Right ventricle myocardium inferior (tissue), 1 donor: ENCODE measurements at regions of chr11 and their contacts with region 1.

Region 1: GRCh38 chr11:75476739-75477612 is 44.0 kb upstream of the KLHL35 start:
- DNase-seq: no peak
- ATAC-seq: peak; percentile 61

Region 2: DNA sequence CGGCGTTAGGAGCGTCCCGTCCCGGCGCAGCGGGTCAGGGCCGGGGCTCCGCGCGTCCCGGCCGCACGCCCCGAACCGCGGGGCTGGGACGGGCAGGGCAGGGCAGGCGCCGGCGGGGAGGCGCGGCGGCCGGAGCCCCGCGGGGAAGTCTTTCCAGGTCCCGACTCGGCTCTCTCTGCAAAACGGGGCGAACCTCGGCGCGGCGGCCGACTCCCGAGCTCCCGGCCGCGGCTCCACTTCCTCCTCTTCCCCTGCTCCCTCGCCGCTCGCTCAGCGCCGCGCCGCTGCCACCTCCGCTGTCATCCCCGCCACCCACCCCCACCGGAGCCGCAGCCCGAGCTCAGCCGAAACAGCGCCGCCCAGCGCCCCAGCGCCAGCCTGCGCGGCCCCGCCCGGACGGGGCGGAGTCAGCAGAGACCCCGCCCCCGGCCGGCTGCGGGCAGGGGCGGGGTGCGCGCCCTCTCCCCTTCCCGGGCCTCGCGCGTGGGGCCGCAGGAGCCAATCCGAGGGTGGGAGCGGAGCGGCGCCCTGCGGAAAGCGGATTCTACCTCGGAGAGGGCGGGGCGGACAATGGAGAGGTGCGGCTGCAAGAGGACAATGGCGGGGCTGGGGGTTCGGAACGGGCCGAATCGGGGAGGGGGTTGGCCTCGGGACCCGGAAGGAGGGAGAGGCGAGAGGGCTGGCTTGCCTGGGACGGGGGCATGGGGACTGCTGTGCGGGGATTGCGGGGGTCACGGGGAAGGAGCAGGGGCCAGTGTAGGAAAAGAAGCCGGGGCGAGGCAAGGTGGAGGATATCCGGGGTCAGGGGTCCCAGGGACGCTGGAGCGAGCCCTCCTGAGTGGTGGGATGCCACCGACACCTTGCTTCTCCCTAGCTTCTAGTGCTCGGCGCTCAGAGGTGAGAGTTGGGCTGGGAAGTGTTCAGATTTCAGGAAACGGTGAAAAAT is 48.9 kb after region 1 on chr11 and contains the start of gene GDPD5:
- intact Hi-C with region 1: loop called (anchors 1 kb)
- DNase-seq: peak; percentile 91
- ATAC-seq: peak; percentile 98
- total RNA-seq, gene GDPD5: 7.7 TPM

Region 3: DNA sequence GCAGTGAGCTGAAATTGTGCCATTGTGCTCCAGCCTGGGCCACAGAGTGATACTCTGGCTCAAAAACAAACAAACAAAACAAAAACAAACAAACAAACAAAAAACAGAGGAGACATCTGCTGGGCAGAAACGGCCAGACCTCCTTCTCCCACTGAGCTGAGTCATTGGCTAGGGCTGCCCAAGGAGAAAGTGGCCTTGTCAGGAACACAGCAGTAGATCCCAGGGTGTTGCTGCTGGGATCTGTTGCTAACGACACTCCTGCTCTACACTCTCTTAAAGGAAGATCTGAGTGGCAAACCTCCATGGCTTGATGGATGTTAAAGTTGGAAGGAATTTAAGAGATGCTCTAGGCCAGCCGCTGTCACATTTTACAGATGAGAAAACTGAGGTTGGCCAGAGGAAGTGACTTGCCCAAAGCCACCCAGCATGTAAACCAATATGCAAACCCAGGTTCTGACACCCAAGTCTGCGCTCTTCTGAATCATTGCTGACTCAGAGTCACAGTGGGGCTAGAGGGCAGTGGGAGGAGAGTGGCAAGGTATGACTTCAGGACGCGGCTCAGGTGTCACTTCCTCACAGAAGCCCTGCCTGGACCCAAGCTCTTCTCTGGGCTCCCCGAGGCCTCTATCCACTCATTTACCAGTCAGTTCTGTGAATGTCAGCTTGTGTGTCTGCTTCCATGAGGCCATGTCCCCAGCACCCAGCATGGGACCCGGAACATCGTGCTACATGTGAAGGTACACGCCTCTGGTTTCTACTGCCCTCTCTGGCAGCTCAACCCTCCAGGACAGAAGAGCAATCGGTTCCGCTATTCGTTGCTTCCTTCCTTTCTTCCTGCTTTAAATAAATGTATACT is 60.0 kb after region 1 on chr11:
- intact Hi-C with region 1: no loop called
- DNase-seq: no peak
- ATAC-seq: no peak